Right ventricle myocardium superior (tissue), 1 donor: ENCODE measurements at regions of chr19 and their contacts with region 1.

Region 1: GRCh38 chr19:37466798-37467607 is at the start of gene ZNF569:
- DNase-seq: peak; percentile 93
- ATAC-seq: peak; percentile 84
- total RNA-seq, gene ZNF569: 5.2 TPM

Region 2: DNA sequence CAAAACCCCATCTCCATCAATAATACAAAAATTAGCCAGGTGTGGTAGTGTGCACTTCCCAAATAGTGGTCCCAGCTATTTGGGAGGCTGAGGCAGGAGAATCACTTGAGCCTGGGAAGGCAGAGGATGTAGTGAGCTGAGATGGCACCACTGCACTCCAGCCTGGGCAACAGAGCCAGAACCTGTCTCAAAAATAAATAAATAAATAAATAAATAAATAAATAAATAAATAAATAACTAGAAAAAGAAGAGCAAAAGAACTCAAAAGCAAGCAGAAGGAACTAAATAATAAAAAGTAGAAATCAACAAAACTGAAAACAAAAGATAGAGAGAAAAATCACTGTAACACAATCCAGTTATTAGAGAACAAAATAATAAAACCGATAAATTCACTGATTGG is 306.9 kb before region 1 on chr19:
- intact Hi-C with region 1: no loop called
- DNase-seq: no peak
- ATAC-seq: no peak

Region 3: GRCh38 chr19:37370880-37371661 is 95.9 kb before region 1 on chr19 and contains the start of gene ZNF527:
- intact Hi-C with region 1: loop called (anchors 10 kb)
- DNase-seq: peak; percentile 99
- ATAC-seq: peak; percentile 99
- total RNA-seq, gene ZNF527: 7.2 TPM

Region 4: DNA sequence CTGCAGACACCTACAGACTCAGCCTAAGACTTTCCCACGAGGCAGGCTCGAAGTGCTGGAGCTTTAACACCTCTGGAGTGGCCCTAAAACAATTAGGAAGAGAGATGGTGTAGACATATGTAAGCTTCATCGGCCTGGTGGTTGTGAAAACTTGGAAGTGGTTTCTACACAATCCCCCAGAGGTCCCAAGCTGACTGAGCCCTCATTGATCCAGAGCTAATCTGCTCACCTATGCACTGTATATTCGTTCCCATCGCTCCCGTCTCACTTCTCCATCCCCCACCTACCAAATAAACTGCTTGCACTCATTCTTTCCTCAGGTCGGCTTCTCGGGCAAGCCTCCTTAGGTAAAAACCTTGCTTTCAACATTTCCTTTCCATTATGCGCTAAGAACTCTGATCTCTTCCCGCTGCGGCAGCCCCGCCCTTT is 39.0 kb after region 1 on chr19:
- intact Hi-C with region 1: loop called (anchors 2 kb)
- DNase-seq: no peak
- ATAC-seq: no peak

Region 5: GRCh38 chr19:37635076-37636056 is 168.4 kb after region 1 on chr19:
- intact Hi-C with region 1: no loop called
- DNase-seq: no peak
- ATAC-seq: no peak